MCF 10A (cell line): ENCODE measurements at regions of chr5 and their contacts with region 1.

Region 1: DNA sequence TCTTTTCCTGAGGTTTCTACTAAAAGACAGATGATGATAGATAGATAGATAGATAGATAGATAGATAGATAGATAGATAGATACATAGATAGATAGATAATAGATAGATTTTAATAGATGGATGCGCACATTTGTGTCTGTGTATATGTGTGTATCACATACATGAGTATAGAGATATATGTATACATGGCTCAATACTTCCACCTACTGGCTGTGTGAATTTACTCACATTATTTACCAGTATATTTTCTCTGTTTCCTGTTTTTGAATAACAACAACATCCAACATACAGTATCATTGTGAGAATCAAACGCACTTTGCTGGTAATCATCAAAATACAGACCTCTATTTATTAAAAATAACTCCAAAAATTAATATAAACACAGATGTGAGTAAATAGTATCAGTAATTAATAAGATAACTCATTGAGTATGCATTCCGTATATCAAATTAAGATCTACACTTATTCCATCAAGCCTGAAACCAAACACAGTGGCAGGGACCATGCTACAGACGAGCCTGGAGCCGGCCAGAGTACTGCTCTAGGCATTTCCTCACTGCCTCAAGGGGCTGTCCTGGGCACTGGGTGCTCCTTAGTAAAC is 338.0 kb downstream of the SEMA5A start:
- DNase-seq: peak; percentile 63
- H3K4me3 Mint-ChIP-seq: no peak overlapping the region
- H3K27ac Mint-ChIP-seq: peak overlapping the region; percentile 82
- H3K4me1 Mint-ChIP-seq: peaks cover 15% of the 10 kb centered on the region
- H3K27me3 Mint-ChIP-seq: no peaks in the 10 kb centered on the region
- CTCF ChIP-seq: peak; percentile 58

Region 2: GRCh38 chr5:8329773-8330172 is 878.1 kb before region 1 on chr5:
- CTCF ChIA-PET with region 1: interaction called, 3 read pairs
- POLR2A ChIA-PET with region 1: no interaction called
- intact Hi-C with region 1: loop called (anchors 10 kb)
- DNase-seq: peak; percentile 38
- H3K4me3 Mint-ChIP-seq: no peak overlapping the region
- H3K27ac Mint-ChIP-seq: no peak overlapping the region
- H3K4me1 Mint-ChIP-seq: no peaks in the 10 kb centered on the region
- H3K27me3 Mint-ChIP-seq: peaks cover 8% of the 10 kb centered on the region
- CTCF ChIP-seq: no peak

Region 3: DNA sequence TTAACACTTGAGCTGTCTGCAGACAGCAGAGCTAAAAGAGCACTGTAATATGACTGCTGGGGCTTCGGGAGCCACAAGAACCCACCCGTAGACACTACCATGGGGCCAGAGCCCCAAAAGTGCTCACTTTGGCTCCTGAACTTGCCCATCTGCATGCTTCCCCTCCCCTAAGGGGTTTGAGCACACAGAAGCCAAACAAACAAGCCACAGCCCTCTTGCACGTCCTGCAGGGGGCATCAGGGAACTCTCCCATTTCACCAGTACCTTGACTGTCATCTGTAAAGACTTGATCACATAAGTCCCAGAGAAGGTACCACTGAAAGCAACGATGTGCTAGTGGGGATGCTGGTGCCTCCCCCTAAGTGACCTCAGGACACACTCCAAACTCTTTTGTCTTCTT is 343.9 kb before region 1 on chr5:
- CTCF ChIA-PET with region 1: interaction called, 3 read pairs
- POLR2A ChIA-PET with region 1: no interaction called
- intact Hi-C with region 1: loop called (anchors 1 kb)
- DNase-seq: peak; percentile 58
- H3K4me3 Mint-ChIP-seq: no peak overlapping the region
- H3K27ac Mint-ChIP-seq: no peak overlapping the region
- H3K4me1 Mint-ChIP-seq: peaks cover 5% of the 10 kb centered on the region
- H3K27me3 Mint-ChIP-seq: no peaks in the 10 kb centered on the region
- CTCF ChIP-seq: peak; percentile 69

Region 4: DNA sequence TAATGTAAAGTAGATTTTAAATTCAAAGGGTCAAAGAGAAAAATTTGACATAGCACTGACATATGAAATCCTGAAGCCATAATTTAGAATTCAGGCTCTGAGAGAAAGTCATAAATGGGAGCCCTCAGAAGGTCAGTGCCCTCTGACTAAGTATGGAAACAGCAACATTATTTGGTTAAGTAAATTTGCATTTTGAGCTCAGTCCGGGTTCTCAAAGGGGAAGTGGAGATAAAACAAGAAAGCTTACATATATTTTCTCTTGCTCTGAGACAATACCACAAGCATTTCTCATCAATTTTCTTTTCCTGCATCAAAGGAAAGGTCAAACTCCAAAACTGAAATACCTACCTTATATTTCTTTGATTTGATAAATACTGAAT is 10.0 kb before region 1 on chr5:
- CTCF ChIA-PET with region 1: interaction called, 20 read pairs
- POLR2A ChIA-PET with region 1: no interaction called
- intact Hi-C with region 1: no loop called
- DNase-seq: no peak
- H3K4me3 Mint-ChIP-seq: no peak overlapping the region
- H3K27ac Mint-ChIP-seq: no peak overlapping the region
- H3K4me1 Mint-ChIP-seq: peaks cover 9% of the 10 kb centered on the region
- H3K27me3 Mint-ChIP-seq: no peaks in the 10 kb centered on the region
- CTCF ChIP-seq: no peak

Region 5: GRCh38 chr5:9544502-9545135 is 336.7 kb after region 1 on chr5:
- CTCF ChIA-PET with region 1: interaction called, 6 read pairs
- POLR2A ChIA-PET with region 1: no interaction called
- intact Hi-C with region 1: loop called (anchors 2 kb)
- DNase-seq: peak; percentile 76
- H3K4me3 Mint-ChIP-seq: peak overlapping the region; percentile 69
- H3K27ac Mint-ChIP-seq: peak overlapping the region; percentile 27
- H3K4me1 Mint-ChIP-seq: peaks cover 7% of the 10 kb centered on the region
- H3K27me3 Mint-ChIP-seq: no peaks in the 10 kb centered on the region
- CTCF ChIP-seq: peak; percentile 93